ENCODE measurements at regions of chrX and their contacts with region 1.

Region 1: GRCh38 chrX:133792198-133792953 is 193.0 kb downstream of the GPC3 start:
- DNase-seq: peak; percentile 88
- H3K4me3 ChIP-seq: no peak overlapping the region
- H3K27ac ChIP-seq: no peak overlapping the region
- H3K4me1 ChIP-seq: no peaks in the 10 kb centered on the region
- H3K27me3 ChIP-seq: no peaks in the 10 kb centered on the region
- CTCF ChIP-seq: peak; percentile 99

Region 2: DNA sequence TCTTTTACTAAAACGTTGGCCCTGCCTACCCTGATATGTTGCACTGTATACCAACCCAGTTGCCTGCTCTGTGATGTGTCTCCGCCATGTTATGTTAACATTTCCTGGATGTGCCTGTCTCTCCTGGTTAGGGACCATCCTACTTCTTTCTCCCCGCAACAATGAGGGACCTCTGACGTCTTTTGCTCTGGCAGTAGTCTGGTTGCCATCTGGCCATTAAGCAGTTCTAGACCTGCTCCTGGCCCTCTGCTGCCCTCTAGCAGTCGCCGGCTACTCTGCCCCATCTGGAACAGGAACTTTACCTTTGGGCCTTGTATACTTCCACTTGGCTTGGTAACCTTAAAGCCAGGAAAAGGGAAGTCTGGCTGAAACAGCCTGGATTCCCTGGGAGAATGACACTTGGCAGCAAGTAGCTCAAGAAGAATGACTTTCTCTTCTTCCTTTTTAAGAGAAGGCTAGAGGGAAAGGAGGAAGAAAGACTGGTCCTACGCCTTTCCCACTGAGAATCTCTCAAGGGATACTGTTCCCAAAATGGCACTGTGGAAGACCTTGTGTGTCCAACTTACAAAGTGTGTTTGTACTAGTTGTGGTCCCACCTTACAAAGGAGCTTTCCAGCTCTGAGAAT is 129.5 kb after region 1 on chrX:
- CTCF ChIA-PET with region 1: no interaction called
- POLR2A ChIA-PET with region 1: no interaction called
- intact Hi-C with region 1: loop called (anchors 5 kb)
- DNase-seq: peak; percentile 22
- H3K4me3 ChIP-seq: no peak overlapping the region
- H3K27ac ChIP-seq: no peak overlapping the region
- H3K4me1 ChIP-seq: no peaks in the 10 kb centered on the region
- H3K27me3 ChIP-seq: no peaks in the 10 kb centered on the region
- CTCF ChIP-seq: peak; percentile 58

Region 3: DNA sequence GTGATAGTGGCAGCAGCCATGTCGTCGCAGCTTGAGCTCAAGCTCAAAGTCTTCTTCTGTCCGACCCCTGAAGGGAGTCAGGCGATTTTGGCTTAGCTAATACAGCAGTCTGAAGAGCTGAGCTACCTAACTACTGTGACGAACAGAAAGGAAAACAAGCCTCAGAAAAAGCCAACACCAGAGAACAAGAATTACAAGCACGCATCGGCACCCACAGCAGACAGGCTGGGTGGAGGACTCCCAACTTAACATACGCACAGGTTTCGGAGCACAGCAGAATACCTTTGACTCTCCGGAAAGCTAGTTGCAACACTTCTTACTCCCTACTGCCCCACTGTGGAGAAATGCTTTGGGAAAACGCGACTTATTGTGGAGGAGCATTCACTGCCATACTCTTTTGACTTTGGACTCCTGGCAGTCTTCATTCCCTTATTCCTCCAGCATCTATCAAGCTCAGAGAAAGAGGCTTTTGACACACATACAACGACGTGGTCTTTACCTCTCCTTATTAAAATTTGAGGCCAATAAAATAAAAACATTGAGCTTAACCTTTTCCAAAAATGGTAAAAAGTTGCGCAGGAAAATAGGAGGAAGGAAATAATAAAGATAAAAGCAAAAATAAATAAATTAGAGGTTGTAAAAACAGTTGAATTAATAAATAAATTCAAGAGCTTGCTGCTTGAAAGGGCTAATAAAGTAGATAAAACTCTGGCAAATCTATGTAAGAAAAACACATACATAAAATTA is 234.4 kb after region 1 on chrX:
- CTCF ChIA-PET with region 1: no interaction called
- POLR2A ChIA-PET with region 1: no interaction called
- intact Hi-C with region 1: loop called (anchors 5 kb)
- DNase-seq: peak; percentile 62
- H3K4me3 ChIP-seq: no peak overlapping the region
- H3K27ac ChIP-seq: no peak overlapping the region
- H3K4me1 ChIP-seq: no peaks in the 10 kb centered on the region
- H3K27me3 ChIP-seq: no peaks in the 10 kb centered on the region
- CTCF ChIP-seq: peak; percentile 53

Region 4: GRCh38 chrX:134144231-134144630 is 351.9 kb after region 1 on chrX:
- CTCF ChIA-PET with region 1: interaction called, 3 read pairs
- POLR2A ChIA-PET with region 1: no interaction called
- intact Hi-C with region 1: loop called (anchors 10 kb)
- DNase-seq: peak; percentile 23
- H3K4me3 ChIP-seq: no peak overlapping the region
- H3K27ac ChIP-seq: no peak overlapping the region
- H3K4me1 ChIP-seq: no peaks in the 10 kb centered on the region
- H3K27me3 ChIP-seq: peaks cover 15% of the 10 kb centered on the region
- CTCF ChIP-seq: peak; percentile 48

Region 5: GRCh38 chrX:134254511-134254910 is 462.1 kb after region 1 on chrX:
- CTCF ChIA-PET with region 1: no interaction called
- POLR2A ChIA-PET with region 1: no interaction called
- intact Hi-C with region 1: loop called (anchors 1 kb)
- DNase-seq: no peak
- H3K4me3 ChIP-seq: no peak overlapping the region
- H3K27ac ChIP-seq: no peak overlapping the region
- H3K4me1 ChIP-seq: no peaks in the 10 kb centered on the region
- H3K27me3 ChIP-seq: no peaks in the 10 kb centered on the region
- CTCF ChIP-seq: no peak

Region 6: GRCh38 chrX:134396174-134396573 is 603.8 kb after region 1 on chrX:
- CTCF ChIA-PET with region 1: interaction called, 3 read pairs
- POLR2A ChIA-PET with region 1: no interaction called
- intact Hi-C with region 1: loop called (anchors 5 kb)
- DNase-seq: peak; percentile 18
- H3K4me3 ChIP-seq: no peak overlapping the region
- H3K27ac ChIP-seq: no peak overlapping the region
- H3K4me1 ChIP-seq: no peaks in the 10 kb centered on the region
- H3K27me3 ChIP-seq: no peaks in the 10 kb centered on the region
- CTCF ChIP-seq: peak; percentile 81

Measured in A673 (cell line).